HepG2 (cell line): ENCODE measurements at regions of chr4 and their contacts with region 1.

Region 1: DNA sequence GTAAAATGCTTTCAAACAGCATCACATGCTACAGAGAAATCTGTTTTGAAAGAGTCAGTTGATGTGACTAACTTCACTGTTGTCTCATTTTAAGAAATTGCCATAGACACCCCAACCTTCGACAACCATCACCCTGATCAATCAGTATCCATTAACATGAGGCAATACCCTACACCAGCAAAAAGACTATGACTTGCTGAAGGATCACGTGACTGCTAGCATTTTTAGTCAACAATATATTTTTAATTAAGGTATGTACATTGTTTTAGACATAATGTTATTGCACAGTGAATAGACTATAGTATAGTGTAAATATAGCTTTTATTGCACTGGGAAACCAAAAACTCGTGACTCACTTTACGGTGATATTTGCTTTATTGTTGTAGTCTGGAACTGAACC is 200.0 kb upstream of the ARHGAP24 start:
- DNase-seq: no peak
- ATAC-seq: no peak
- H3K4me3 ChIP-seq: no peak overlapping the region
- H3K27ac ChIP-seq: no peak overlapping the region
- H3K4me1 ChIP-seq: no peaks in the 10 kb centered on the region
- H3K27me3 ChIP-seq: no peaks in the 10 kb centered on the region
- CTCF ChIP-seq: no peak
- EP300 ChIP-seq: no peak
- POLR2A ChIP-seq: no peak
- RAD21 ChIP-seq: no peak

Region 2: DNA sequence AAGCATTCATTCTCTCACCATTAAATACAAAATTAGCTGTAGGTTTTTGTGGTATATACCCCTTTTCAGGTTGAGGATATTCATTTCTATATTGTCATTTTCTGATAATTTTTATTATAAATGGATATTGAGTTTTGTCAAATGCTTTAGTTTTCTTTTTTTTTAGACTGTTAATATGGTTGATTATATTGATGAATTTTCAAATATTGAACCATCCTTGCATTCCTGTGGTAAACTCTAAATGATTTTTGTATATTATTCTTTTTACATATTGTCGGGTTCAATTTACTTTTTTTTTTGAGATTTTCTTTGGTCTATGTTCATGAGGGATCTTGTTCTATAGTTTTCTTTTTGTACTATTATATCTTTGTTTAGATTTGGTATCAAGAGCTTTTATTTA is 1573.9 kb before region 1 on chr4:
- CTCF ChIA-PET with region 1: no interaction called
- POLR2A ChIA-PET with region 1: no interaction called
- in situ Hi-C with region 1: no loop called
- intact Hi-C with region 1: no loop called
- DNase-seq: no peak
- ATAC-seq: no peak
- H3K4me3 ChIP-seq: no peak overlapping the region
- H3K27ac ChIP-seq: no peak overlapping the region
- H3K4me1 ChIP-seq: no peaks in the 10 kb centered on the region
- H3K27me3 ChIP-seq: no peaks in the 10 kb centered on the region
- CTCF ChIP-seq: no peak
- EP300 ChIP-seq: no peak
- POLR2A ChIP-seq: no peak
- RAD21 ChIP-seq: no peak

Region 3: GRCh38 chr4:85260064-85260463 is 14.9 kb before region 1 on chr4:
- CTCF ChIA-PET with region 1: no interaction called
- POLR2A ChIA-PET with region 1: no interaction called
- in situ Hi-C with region 1: no loop called
- intact Hi-C with region 1: loop called (anchors 1 kb)
- DNase-seq: no peak
- ATAC-seq: no peak
- H3K4me3 ChIP-seq: no peak overlapping the region
- H3K27ac ChIP-seq: no peak overlapping the region
- H3K4me1 ChIP-seq: no peaks in the 10 kb centered on the region
- H3K27me3 ChIP-seq: no peaks in the 10 kb centered on the region
- CTCF ChIP-seq: no peak
- EP300 ChIP-seq: no peak
- POLR2A ChIP-seq: no peak
- RAD21 ChIP-seq: no peak

Region 4: DNA sequence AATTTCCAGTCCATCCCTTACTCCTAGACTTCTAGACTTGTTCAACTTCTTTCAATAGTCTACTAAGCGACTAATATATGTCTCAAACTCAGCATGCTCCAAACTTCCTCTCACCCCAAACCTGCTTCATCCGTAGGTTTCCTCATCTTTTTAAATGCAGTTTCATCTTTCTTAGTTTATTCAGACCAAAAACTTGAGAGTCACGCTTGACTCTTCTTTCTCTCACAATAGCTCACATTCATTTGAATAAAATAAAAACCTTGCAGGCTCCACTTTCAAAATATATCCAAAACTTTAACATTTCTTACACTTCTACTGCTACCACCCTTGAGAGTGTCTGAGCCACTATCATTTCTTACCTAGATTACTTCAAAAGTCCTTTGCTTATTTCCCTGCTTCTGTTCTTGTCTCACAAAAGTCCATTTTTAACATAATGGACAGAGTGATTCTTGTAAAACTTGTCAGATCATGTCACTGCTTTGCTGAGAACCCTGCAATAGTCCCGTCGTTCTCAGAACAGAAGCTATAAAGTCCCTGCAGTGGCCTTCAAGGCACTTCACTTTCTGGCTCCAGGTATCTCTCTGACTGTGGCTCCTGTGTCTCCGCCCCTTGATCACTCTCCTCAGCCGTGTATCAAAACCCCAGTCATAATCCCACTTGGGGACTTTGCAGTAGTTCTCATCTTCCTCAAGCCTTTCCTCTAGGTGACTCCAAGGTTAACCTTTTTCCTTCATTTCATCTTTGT is 367.6 kb after region 1 on chr4:
- CTCF ChIA-PET with region 1: no interaction called
- POLR2A ChIA-PET with region 1: no interaction called
- in situ Hi-C with region 1: no loop called
- intact Hi-C with region 1: no loop called
- DNase-seq: no peak
- ATAC-seq: no peak
- H3K4me3 ChIP-seq: no peak overlapping the region
- H3K27ac ChIP-seq: no peak overlapping the region
- H3K4me1 ChIP-seq: no peaks in the 10 kb centered on the region
- H3K27me3 ChIP-seq: no peaks in the 10 kb centered on the region
- CTCF ChIP-seq: no peak
- EP300 ChIP-seq: no peak
- POLR2A ChIP-seq: no peak
- RAD21 ChIP-seq: no peak